ENCODE measurements at regions of chr9 and their contacts with region 1.

Region 1: GRCh38 chr9:126523611-126524111 is 90.1 kb upstream of the LMX1B start:
- DNase-seq: no peak

Region 2: GRCh38 chr9:126398403-126399058 is 125.1 kb before region 1 on chr9:
- in situ Hi-C with region 1: no loop called
- DNase-seq: peak; percentile 77

Region 3: DNA sequence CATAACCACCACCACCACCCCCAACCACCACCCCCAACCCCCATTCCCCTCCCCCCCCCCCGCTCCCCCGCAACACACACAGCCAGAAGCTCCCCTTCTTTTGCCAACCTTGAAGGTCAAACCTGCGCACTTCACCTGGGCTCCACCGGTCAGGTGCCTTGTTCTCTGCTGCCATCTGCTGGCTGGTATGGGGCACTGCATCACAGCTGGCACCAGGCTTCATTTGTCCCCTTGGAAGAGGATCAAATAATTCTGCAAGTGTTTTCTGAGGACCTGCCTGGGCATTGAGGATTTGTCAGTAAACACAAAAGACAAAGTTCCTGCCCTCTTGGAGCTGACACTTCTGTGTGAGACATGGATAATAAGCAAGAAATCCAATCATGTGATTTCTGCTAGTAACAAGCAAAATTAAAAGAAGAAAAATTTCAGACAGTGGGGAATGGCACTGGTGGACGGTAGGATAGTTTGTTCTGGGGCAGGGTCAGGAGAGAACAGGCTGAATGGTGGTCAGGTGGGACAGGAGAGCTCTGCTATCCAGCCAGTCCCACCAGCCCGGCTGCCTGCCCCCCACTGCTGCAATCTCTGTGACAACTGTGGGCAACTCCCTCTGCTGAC is 34.5 kb after region 1 on chr9:
- in situ Hi-C with region 1: loop called (anchors 5 kb)
- DNase-seq: peak; percentile 81

Measured in G401 (cell line).